CD8-positive, alpha-beta T cell (primary cell): ENCODE measurements at regions of chr11 and their contacts with region 1.

Region 1: GRCh38 chr11:60821827-60822599 is 19.9 kb upstream of the CCDC86 start:
- DNase-seq: peak in 1 of 9 experiments; percentile 18
- ATAC-seq: no peak
- H3K4me3 ChIP-seq: no peak overlapping the region
- H3K4me3 Mint-ChIP-seq: no peak overlapping the region
- H3K27ac ChIP-seq: no peak overlapping the region
- H3K27ac Mint-ChIP-seq: no peak overlapping the region
- H3K4me1 ChIP-seq: no peaks in the 10 kb centered on the region
- H3K4me1 Mint-ChIP-seq: no peaks in the 10 kb centered on the region
- H3K27me3 ChIP-seq: no peaks in the 10 kb centered on the region
- H3K27me3 Mint-ChIP-seq: no peaks in the 10 kb centered on the region
- CTCF ChIP-seq: no peak

Region 2: DNA sequence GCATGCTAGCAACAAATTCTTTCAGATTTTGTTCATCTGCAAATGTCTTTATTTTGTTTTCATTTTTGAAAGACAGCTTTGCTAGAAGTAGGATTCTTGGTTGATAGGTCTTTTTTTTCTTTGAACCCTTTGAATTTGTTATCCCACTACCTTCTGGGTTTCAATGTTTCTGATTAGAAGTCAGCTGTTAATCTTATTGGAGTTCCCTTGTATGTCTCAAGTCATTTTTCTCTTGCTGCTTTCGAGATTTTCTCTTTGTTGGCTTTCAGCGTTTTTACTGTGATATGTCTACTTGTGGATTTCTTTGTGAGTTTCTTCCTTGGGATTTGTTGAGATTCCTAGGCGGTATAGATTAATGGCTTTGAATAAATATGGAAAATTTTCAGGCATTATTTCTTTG is 149.8 kb before region 1 on chr11:
- CTCF ChIA-PET with region 1: no interaction called
- POLR2A ChIA-PET with region 1: no interaction called
- intact Hi-C with region 1: no loop called
- DNase-seq: no peak
- ATAC-seq: no peak
- H3K4me3 ChIP-seq: no peak overlapping the region
- H3K4me3 Mint-ChIP-seq: no peak overlapping the region
- H3K27ac ChIP-seq: no peak overlapping the region
- H3K27ac Mint-ChIP-seq: no peak overlapping the region
- H3K4me1 ChIP-seq: no peaks in the 10 kb centered on the region
- H3K4me1 Mint-ChIP-seq: no peaks in the 10 kb centered on the region
- H3K27me3 ChIP-seq: no peaks in the 10 kb centered on the region
- H3K27me3 Mint-ChIP-seq: peaks cover 10% of the 10 kb centered on the region
- CTCF ChIP-seq: no peak

Region 3: DNA sequence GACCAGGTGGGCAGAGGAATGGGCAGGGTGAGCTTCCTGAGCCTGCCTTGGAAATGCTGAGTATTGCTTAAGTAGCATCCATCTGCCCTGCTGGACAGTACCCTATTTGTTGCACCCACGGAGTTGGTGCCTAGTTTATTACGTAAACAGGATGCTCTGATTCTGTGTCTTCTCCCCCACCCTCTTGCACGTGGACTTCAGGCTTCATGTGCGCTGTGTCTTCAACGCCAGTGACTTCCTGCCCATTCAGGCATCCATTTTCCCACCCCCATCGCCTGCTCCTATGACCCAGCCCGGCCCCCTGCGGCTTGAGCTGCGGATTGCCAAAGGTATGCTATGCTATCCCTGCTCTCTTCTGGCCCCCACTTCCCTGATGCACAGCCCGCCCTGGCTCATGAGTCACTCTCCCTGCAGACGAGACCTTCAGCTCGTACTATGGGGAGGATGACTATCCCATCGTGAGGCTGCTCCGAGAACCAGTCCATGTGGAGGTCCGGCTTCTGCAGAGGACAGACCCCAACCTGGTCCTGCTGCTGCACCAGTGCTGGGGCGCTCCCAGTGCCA is 51.0 kb after region 1 on chr11:
- CTCF ChIA-PET with region 1: no interaction called
- POLR2A ChIA-PET with region 1: no interaction called
- intact Hi-C with region 1: no loop called
- DNase-seq: peak in 4 of 9 experiments; percentile 14 to 43 (median 34)
- ATAC-seq: peak; percentile 56
- H3K4me3 ChIP-seq: no peak overlapping the region
- H3K4me3 Mint-ChIP-seq: no peak overlapping the region
- H3K27ac ChIP-seq: no peak overlapping the region
- H3K27ac Mint-ChIP-seq: peak overlapping the region; percentile 32
- H3K4me1 ChIP-seq: peaks cover 47% of the 10 kb centered on the region
- H3K4me1 Mint-ChIP-seq: peaks cover 47% of the 10 kb centered on the region
- H3K27me3 ChIP-seq: no peaks in the 10 kb centered on the region
- H3K27me3 Mint-ChIP-seq: no peaks in the 10 kb centered on the region
- CTCF ChIP-seq: no peak

Region 4: DNA sequence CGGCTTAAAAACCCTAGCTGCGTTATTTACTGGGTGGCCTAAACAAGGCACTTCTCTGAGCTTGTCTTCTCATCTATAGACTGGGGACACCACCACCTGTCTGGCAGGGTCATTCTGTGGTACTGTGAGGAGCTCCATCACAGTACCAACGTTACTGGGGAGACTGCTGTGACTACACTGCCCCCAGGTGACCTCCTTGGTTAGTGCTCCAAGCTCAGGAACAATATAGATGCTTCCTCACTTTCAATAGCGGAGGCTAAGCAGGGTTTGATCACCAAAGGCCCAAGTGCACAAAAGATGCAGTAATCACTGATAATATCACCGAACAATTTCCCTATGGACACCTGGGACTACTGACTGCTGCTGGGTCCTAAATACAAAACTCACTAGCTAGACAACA is 65.5 kb after region 1 on chr11:
- CTCF ChIA-PET with region 1: interaction called, 30 read pairs
- POLR2A ChIA-PET with region 1: no interaction called
- intact Hi-C with region 1: no loop called
- DNase-seq: peak in 7 of 9 experiments; percentile 33 to 66 (median 49)
- ATAC-seq: peak; percentile 82
- H3K4me3 ChIP-seq: no peak overlapping the region
- H3K4me3 Mint-ChIP-seq: no peak overlapping the region
- H3K27ac ChIP-seq: no peak overlapping the region
- H3K27ac Mint-ChIP-seq: no peak overlapping the region
- H3K4me1 ChIP-seq: no peaks in the 10 kb centered on the region
- H3K4me1 Mint-ChIP-seq: peaks cover 6% of the 10 kb centered on the region
- H3K27me3 ChIP-seq: no peaks in the 10 kb centered on the region
- H3K27me3 Mint-ChIP-seq: no peaks in the 10 kb centered on the region
- CTCF ChIP-seq: peak; percentile 52